Heart left ventricle (tissue), 16 donors: ENCODE measurements at regions of chr14 and their contacts with region 1.

Region 1: DNA sequence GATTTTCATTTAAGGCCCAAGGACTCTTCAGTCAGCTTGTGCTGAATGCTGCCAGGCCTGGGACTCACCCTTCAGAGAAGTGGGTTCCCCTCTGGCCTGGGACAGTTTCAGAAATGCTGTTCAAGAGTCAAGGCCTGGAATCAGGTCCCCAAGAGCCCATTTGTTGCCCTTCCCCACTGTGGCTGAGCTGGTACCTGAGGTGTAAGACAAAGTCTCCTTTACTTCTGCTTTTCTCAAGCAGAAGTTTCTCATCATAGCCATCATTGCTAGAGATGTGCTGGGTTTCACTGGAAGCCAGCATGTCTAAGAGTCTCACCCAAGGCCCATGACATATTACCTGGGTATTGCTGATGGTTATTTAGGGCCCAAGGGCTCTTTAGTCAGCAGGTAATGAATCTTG is 8.9 kb downstream of the FANCM start:
- DNase-seq: no peak
- ATAC-seq: no peak
- H3K4me3 ChIP-seq: no peak overlapping the region
- H3K27ac ChIP-seq: no peak overlapping the region
- H3K4me1 ChIP-seq: no peaks in the 10 kb centered on the region
- H3K27me3 ChIP-seq: no peaks in the 10 kb centered on the region
- CTCF ChIP-seq: no peak
- POLR2A ChIP-seq: no peak

Region 2: GRCh38 chr14:44928793-44929192 is 215.9 kb before region 1 on chr14:
- intact Hi-C with region 1: loop called in 1 of 10 experiments (anchors 10 kb)
- DNase-seq: no peak
- ATAC-seq: no peak
- H3K4me3 ChIP-seq: no peak overlapping the region
- H3K27ac ChIP-seq: no peak overlapping the region
- H3K4me1 ChIP-seq: no peaks in the 10 kb centered on the region
- H3K27me3 ChIP-seq: no peaks in the 10 kb centered on the region
- CTCF ChIP-seq: no peak
- POLR2A ChIP-seq: no peak

Region 3: GRCh38 chr14:45212231-45212630 is 67.6 kb after region 1 on chr14:
- intact Hi-C with region 1: no loop called
- DNase-seq: no peak
- ATAC-seq: peak in 1 of 4 donors; percentile 15
- H3K4me3 ChIP-seq: no peak overlapping the region
- H3K27ac ChIP-seq: no peak overlapping the region
- H3K4me1 ChIP-seq: peaks cover 0 to 12% (median 0%) of the 10 kb centered on the region in 12 donors
- H3K27me3 ChIP-seq: no peaks in the 10 kb centered on the region
- CTCF ChIP-seq: no peak
- POLR2A ChIP-seq: no peak

Region 4: DNA sequence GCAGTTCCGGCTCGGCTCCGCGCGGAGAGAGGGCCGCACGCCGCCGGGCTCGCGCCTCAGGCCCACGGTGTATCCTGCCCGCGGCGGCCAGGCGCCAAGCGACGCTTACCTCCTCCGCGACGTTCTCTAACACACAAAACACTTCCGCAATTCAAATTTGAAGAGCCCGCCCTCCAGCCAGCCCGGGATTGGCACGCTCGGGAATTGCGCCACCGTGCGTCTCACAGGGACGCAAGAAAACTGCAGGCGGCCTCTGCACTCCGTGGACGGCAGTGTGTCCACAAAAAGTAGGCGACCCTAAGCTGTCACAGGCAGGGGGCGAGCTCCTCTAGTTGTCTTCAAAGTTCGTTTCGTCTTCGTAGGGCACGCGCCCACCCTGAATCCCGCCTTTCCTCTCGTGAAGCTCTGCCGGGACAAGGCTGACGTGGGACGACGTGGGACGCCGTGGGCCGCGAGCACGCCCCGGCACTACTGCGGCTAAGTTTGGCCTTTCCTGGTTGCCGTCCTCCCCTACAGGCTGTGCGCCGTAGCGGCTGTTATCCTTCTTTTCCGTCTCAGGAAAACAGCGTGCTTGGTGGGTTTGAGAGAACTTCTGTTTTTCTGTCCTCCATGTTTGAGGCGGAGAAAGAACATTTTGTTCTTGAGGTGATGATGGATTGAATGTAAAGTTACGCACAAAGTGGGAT is 108.6 kb after region 1 on chr14 and contains the start of gene MIS18BP1:
- intact Hi-C with region 1: loop called in 4 of 10 experiments (anchors 5 to 10 kb)
- DNase-seq: peak; percentile 96 to 97 (median 97)
- ATAC-seq: peak; percentile 96 to 98 (median 97)
- H3K4me3 ChIP-seq: peak within 1 kb of the TSS; percentile 55 to 88 (median 78)
- H3K27ac ChIP-seq: peak within 1 kb of the TSS; percentile 87 to 98 (median 93)
- H3K4me1 ChIP-seq: peaks cover 0 to 53% (median 20%) of the 10 kb centered on the region in 12 donors
- H3K27me3 ChIP-seq: no peaks in the 10 kb centered on the region
- CTCF ChIP-seq: peak; percentile 63 to 97 (median 83)
- POLR2A ChIP-seq: peak in 1 of 2 donors; percentile 34
- total RNA-seq, gene MIS18BP1: 4.1 to 22.0 (median 7.1) TPM

Region 5: DNA sequence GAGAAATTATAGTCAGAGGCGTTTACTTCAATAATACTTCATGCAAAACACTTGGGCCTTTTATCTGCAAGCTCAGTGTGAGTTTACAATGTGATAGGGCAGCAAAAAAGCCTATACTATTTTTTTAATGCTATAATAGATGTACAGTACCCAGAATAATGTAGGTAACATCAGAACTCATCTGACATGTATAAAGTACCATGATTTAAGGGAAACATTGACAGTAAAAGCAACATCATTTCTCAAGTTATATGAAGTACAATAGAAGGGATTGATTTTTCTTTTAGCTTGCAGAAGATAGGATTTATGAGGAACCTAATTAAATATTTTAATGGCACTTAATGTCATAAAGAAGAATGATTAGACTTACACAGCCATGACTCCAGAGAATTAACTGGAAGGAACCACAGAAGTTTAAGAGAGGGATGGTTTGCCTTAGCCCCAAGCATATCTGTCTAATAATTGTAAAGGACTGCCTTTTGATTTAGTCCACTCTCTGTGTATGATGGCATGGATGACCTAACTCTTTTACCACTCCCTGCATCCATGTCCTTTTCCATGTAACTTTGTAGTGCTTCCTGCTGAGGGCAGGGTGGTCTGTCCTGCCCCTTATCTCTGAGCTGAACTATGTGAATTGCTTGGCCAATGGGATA is 164.2 kb after region 1 on chr14:
- intact Hi-C with region 1: no loop called
- DNase-seq: no peak
- ATAC-seq: no peak
- H3K4me3 ChIP-seq: no peak overlapping the region
- H3K27ac ChIP-seq: no peak overlapping the region
- H3K4me1 ChIP-seq: no peaks in the 10 kb centered on the region
- H3K27me3 ChIP-seq: no peaks in the 10 kb centered on the region
- CTCF ChIP-seq: no peak
- POLR2A ChIP-seq: no peak